RWPE1 (cell line): ENCODE measurements at regions of chr17 and their contacts with region 1.

Region 1: GRCh38 chr17:5533486-5534315 is 47.3 kb downstream of the MIS12 start:
- DNase-seq: no peak
- H3K27ac ChIP-seq: 0 out of 2 replicates have a peak overlapping the region, but pooled peaks have one; percentile 6
- CTCF ChIP-seq: no peak

Region 2: DNA sequence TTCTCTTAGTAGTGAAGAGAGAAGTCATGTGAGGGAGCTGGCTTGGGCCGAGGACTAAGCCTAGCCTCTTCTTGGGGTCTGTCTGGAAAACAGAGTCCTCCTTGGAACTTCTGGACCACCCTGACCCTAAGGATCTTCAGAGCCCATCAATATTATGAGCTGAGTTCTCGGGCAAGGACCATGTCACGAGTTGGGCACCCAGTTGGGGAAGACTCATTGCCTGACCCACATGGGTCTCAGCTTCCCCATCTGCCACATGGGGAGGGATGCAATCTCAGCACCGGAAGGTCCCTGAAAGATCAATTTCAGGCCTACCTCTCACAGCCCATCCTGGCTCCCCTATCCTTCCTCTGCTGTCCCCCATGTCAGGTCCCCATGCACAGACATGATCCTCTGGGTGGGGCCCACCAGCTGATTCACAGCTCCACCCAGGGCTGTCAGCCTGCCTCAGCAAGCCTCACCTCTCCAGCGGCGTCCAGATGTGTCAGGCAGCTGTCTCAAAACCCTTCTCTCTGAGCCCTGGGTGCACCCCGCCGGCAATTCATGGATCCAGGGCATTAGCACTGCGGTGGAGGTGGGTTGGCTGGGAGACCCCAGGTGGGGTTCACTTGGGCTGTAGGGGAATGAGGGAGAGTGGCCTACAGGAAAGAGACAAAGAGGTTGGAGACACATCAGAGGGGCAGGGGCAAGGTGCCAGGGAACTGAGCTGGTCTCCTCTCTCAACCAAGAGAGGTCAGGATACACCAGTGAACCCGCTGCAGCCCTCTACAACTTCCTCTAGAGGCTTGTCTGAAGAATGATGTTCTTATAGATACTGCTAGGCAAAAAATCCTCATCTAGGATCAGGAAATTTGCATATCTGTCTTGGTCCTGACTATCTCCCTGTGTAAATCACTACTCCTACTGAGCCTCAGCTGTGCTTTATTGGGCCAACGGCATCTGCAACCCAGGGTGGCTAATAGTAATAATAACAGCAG is 48.8 kb after region 1 on chr17:
- CTCF ChIA-PET with region 1: no interaction called
- POLR2A ChIA-PET with region 1: interaction called, 14 read pairs
- DNase-seq: no peak
- H3K27ac ChIP-seq: peak overlapping the region; percentile 99
- CTCF ChIP-seq: no peak

Region 3: DNA sequence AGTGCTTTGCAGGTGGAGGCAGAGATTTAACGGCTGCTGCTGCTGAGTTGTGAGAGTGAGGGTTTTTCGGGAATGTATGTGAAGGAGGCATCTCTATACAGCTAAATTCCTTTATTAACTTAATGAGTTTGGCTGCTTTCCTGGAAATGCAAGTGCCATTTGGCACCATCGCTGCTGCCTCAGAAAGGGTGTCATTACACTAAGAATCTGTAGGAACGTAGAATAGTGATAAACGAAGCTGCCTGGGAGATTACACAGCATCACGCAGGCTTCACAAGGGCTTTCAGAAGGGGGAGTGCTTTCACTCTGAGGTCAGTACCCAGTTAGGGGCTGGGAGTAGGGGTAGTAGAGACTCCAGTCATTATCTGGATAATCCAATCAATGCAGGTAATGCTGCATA is 64.8 kb after region 1 on chr17:
- CTCF ChIA-PET with region 1: no interaction called
- POLR2A ChIA-PET with region 1: no interaction called
- DNase-seq: no peak
- H3K27ac ChIP-seq: no peak overlapping the region
- CTCF ChIP-seq: no peak

Region 4: GRCh38 chr17:5785867-5786509 is 252.3 kb after region 1 on chr17:
- CTCF ChIA-PET with region 1: no interaction called
- POLR2A ChIA-PET with region 1: no interaction called
- DNase-seq: no peak
- H3K27ac ChIP-seq: no peak overlapping the region
- CTCF ChIP-seq: no peak